GM23248 (cell line): ENCODE measurements at regions of chr17 and their contacts with region 1.

Region 1: DNA sequence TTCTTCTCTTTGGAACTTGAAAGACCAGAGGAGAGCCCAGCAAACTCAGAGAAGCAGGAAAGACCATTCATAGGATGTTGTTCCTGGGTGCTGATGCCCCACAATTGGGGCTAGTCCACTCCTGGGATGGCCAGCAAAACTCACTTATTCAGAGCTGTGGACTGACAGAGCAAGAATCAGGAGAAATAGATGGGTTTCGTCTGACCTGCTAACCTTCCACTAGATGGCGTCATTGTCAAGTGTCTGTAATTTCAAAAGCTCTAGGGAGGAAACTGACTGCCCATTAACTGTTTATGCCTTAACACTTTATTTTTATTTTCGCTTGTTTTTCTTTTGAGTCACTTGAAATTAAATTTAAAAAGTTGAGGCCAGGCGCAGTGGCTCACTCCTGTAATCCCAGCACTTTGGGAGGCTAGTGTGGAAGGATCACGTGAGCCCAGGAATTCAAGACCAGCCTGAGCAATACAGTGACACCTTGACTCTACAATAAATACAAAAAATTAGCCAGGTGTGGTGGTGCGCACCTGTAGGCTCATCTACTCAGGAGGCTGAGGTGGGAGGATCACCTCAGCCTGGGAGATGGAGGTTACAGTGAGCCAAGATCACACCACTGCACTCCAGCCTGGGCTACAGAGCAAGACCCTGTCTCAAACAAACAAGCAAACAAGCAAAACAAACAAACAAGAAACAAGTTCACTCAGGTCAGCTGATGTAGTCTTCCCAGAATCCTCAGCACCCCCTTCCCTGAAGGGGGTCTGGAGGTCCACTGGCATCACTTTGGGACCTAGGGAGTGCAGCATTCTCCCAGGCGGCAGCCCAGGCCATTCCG is 28.6 kb upstream of the MILR1 start:
- DNase-seq: peak; percentile 85
- H3K4me3 ChIP-seq: no peak overlapping the region
- H3K27ac ChIP-seq: no peak overlapping the region
- H3K4me1 ChIP-seq: peaks cover 6% of the 10 kb centered on the region; the same call in 1 of the 2 replicates
- H3K27me3 ChIP-seq: no peaks in the 10 kb centered on the region

Region 2: DNA sequence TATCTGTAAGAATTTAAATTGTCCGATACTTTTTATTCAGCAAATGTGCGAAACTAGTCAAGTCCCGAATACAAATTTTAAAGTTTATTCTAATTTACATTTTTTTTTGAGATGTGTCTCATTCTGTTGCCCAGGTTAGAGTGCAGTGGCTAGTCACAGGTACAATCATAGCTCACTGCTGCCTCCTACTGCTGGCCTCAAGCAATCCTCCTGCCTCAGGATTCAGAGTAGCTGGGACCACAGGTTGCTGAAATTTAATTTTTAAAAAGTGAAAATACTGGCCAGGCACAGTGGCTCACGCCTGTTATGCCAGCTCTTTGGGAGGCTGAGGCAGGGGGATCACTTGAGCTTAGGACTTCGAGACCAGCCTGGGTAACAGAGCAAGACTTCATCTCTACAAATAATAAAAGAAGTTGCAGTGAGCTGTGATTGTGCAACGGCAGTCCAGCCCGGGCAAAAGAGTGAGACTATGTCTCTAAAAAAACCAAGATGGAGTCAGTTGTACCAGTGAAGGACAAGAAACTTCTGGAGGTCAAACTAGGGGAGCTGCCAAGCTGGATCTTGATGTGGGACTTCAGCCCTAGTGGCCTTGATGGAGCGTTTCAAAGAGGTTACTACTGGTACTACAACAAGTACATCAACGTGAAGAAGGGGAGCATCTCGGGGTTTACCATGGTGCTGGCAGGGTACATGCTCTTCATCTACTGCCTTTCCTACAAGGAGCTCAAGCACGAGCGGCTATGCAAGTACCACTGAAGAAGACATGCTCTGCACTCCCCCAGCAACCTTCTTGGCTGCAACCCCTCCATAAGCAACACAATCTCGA is 70.9 kb after region 1 on chr17:
- in situ Hi-C with region 1: loop called (anchors 5 kb)
- DNase-seq: peak; percentile 63
- H3K4me3 ChIP-seq: no peak overlapping the region
- H3K27ac ChIP-seq: no peak overlapping the region
- H3K4me1 ChIP-seq: peaks cover 17% of the 10 kb centered on the region
- H3K27me3 ChIP-seq: no peaks in the 10 kb centered on the region